ENCODE measurements at regions of chr6 and their contacts with region 1.

Region 1: DNA sequence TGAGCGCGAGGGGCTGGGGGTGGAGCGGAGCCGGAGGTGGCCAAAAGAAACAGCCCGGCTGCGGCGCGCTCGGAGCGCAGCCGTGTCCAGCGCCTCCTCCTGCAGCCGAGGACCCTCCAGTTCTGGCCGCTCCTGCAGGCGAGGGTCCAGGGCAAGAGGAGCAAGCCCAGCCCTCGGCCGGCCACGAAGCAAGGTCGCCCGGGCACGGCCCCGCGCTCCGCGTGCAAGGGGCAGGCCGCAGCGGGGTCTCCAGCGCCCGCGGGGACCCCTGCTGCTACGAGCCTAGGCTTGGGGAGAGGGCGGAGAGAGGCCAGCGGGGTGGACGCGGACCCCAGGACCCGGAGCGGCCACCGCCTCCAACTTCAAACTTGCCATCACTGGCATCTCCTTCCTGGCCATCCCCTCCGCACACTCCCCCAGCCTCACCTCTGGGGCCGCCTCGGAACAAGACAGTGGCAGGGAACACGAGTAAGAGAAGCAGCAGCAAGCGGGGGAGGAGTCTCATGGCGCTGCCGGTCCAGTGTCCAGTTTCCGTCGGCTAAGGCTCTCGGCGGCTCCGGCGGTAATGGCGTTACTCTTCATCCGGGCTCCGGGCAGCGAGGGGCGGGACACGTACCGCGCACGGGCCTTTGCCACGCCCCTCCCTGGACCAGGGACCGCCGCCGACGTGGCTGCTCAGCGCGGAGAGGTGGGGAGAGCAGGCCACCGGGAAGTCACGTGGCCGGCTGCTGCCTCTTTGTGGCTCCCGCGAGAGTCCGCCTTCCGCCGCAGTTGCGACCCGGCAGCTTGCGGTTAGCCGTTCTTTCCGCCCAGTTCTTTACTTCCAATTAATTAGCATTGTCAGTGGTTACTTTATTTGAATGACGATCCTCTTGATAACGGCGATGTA is at the start of gene SSR1:
- DNase-seq: peak; percentile 99
- ATAC-seq: peak; percentile 100
- total RNA-seq, gene SSR1: 62.5 TPM

Region 2: GRCh38 chr6:7367408-7367807 is 54.5 kb after region 1 on chr6:
- intact Hi-C with region 1: no loop called
- DNase-seq: no peak
- ATAC-seq: no peak

Region 3: DNA sequence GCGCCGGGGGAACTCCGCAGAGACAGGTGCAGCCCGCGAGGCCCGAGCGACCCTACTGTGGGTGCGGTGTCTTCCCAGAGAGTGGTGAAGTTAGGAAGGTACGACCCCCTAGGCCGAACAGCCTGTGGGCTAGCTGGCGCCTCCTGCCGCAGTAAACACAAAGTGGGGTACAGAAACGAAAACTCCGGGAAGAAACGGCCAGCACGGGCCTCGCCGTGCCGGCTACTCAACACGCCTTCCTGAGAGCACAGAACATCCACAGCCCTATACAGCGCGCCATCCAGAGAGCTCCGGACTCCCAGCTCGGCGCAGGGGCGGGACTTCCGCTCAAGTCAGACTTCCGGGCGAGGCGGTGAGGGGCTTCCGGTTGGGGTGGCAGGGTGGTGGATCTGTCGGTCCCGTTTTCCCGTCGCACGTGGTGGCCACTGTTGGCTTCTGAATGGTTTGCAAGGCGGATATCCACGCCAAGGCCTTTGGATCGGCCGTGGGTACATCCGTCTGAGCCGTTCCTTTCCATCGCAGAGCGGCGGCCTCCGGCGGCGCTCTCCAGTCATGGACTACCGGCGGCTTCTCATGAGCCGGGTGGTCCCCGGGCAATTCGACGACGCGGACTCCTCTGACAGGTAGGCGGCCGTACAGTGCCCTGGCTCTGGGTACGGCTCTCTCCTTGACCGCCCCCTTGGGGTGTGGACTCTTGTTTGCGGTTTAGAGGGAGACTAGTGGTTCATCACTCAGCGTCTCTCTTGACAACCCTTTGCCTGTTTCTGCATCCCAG is 76.8 kb after region 1 on chr6 and contains the starts of genes CAGE1 and RIOK1:
- intact Hi-C with region 1: loop called (anchors 5 kb)
- DNase-seq: peak; percentile 98
- ATAC-seq: peak; percentile 100
- total RNA-seq, gene CAGE1: not detected
- total RNA-seq, gene RIOK1: 10.8 TPM

Region 4: DNA sequence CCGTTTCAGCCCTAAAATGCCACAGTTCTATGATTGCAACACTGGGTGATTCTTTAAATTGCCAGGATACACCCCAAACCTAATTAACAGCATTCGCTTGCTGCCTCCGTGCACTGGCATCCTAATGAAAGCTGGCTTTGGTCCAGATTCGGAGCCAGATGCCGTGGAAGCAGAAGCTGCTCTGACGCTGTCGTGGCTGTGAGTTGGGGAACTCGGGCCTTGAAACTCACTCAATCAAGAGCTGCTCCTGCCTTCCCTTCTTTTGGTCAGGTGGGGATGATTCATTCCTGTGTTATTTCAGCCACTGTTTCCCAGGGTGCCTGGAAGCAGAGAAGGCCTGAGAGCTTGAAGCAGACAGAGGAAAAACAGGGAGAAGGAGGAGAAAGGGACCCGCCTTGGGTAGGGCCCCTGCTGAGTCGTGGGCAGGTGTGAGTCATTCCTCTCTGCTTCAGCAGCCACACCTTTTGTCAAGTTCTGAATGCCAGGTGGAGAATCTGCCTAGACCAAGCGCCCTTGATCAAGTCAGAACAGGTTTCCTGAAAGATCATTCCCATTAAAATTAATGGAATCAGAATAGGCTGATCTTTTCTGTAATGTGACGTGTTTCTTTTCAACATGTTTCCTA is 192.4 kb after region 1 on chr6:
- intact Hi-C with region 1: no loop called
- DNase-seq: peak; percentile 49
- ATAC-seq: peak; percentile 30

Region 5: GRCh38 chr6:8400663-8401062 is 1087.8 kb after region 1 on chr6:
- intact Hi-C with region 1: no loop called
- DNase-seq: no peak
- ATAC-seq: no peak